ENCODE measurements at regions of chr14 and their contacts with region 1.

Region 1: GRCh38 chr14:57461777-57462320 is 31.8 kb downstream of the CCDC198 start:
- DNase-seq: peak; percentile 40
- H3K4me3 Mint-ChIP-seq: no peak overlapping the region
- H3K27ac Mint-ChIP-seq: peak overlapping the region; percentile 88
- H3K4me1 Mint-ChIP-seq: peaks cover 27% of the 10 kb centered on the region
- H3K27me3 Mint-ChIP-seq: no peaks in the 10 kb centered on the region
- CTCF ChIP-seq: no peak

Region 2: DNA sequence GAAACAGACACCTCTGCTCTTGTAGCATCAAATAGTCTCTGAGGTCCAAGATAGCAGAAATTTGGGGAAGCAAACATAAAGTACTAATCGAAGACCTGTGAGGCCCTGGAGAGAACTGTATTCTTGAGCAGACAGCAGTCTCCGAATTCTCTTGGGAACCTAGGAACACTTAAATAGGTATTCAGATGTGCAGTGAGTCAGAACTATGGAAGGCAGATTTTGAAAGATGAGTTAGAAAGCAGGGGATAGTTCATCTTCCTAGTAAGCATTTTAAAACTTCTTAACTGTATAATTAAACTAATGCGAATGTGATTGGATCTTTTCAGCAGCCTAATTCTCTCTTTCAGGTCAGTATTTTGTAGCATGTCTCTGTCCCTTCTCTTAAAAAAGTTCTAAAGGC is 40.9 kb before region 1 on chr14:
- CTCF ChIA-PET with region 1: no interaction called
- POLR2A ChIA-PET with region 1: no interaction called
- intact Hi-C with region 1: loop called (anchors 1 kb)
- DNase-seq: no peak
- H3K4me3 Mint-ChIP-seq: no peak overlapping the region
- H3K27ac Mint-ChIP-seq: no peak overlapping the region
- H3K4me1 Mint-ChIP-seq: peaks cover 4% of the 10 kb centered on the region
- H3K27me3 Mint-ChIP-seq: no peaks in the 10 kb centered on the region
- CTCF ChIP-seq: no peak

Region 3: GRCh38 chr14:57435923-57436322 is 25.9 kb before region 1 on chr14:
- CTCF ChIA-PET with region 1: no interaction called
- POLR2A ChIA-PET with region 1: no interaction called
- intact Hi-C with region 1: no loop called
- DNase-seq: no peak
- H3K4me3 Mint-ChIP-seq: no peak overlapping the region
- H3K27ac Mint-ChIP-seq: no peak overlapping the region
- H3K4me1 Mint-ChIP-seq: no peaks in the 10 kb centered on the region
- H3K27me3 Mint-ChIP-seq: no peaks in the 10 kb centered on the region
- CTCF ChIP-seq: no peak